GM18951 (cell line): ENCODE measurements at regions of chr4 and their contacts with region 1.

Region 1: DNA sequence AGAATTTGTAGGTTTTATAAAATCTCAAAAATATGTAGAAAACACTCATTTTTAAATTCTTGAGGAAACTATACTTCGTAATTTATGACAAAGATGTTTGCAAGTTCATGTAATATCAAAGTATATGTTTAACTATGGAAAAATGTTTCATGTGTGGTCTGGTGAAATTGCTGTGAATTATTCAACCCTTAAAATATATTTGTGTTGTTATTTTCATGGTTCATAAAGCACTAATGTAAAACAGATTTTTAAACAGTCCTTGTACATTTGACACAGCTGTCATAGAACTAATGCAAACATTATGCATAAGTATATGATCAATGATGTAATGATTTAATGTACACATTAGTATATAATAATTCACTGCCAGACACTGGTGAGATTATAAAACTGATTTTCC is 83.1 kb upstream of the ARSJ start:
- POLR2A ChIP-seq: no peak

Region 2: DNA sequence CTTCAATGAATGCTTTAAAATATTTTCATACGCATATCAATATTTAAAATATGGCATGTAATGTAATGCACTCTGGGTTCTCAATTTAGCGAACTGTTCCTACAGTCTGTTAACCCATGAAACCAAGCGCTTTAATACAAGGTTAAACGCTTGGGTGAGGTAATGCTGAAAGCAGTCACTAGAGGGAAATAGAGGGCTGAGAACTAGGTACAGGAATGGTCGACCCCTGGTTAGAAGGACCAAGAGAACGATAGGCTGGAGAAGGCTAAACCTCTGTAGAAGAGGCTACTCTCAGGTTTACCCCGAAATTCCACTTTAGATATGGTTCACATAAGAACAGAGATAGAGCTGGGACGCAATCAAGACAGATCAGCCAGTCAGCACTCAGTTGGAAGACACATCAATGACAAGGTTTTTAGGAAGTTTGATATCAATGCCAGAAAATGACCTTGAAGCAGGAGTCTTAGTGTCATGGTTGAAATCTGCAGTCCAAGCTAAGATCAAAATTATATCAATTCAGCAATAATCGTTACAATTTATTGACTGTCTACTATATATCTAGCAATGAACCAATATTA is 110.0 kb before region 1 on chr4:
- in situ Hi-C with region 1: loop called (anchors 10 kb)
- POLR2A ChIP-seq: no peak

Region 3: DNA sequence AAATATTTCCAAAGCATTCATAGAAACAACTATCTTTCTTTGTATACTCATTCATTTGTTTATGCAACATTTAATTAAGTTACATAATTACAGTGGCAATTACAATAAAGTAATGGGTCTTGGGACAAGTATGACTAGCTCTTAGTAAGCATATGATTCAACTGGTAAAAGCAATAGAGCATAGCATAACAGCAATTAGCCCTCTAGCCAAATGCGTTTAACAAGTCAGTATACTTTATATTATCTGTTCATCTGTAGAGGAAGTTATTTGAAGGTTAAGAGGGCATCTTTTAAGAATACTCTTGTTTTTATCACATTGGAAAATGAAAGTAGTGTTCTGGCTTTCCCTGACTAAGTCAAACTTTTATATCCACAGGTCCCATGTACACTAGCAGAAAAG is 338.0 kb after region 1 on chr4:
- in situ Hi-C with region 1: no loop called
- POLR2A ChIP-seq: no peak